Dendritic cell treated with granulocyte-macrophage colony-stimulating factor and Interleukin-4, amounts not matched to agents 40 ng/mL and 50 ng/mL, for 4 days (primary cell): ENCODE measurements at regions of chr15 and their contacts with region 1.

Region 1: DNA sequence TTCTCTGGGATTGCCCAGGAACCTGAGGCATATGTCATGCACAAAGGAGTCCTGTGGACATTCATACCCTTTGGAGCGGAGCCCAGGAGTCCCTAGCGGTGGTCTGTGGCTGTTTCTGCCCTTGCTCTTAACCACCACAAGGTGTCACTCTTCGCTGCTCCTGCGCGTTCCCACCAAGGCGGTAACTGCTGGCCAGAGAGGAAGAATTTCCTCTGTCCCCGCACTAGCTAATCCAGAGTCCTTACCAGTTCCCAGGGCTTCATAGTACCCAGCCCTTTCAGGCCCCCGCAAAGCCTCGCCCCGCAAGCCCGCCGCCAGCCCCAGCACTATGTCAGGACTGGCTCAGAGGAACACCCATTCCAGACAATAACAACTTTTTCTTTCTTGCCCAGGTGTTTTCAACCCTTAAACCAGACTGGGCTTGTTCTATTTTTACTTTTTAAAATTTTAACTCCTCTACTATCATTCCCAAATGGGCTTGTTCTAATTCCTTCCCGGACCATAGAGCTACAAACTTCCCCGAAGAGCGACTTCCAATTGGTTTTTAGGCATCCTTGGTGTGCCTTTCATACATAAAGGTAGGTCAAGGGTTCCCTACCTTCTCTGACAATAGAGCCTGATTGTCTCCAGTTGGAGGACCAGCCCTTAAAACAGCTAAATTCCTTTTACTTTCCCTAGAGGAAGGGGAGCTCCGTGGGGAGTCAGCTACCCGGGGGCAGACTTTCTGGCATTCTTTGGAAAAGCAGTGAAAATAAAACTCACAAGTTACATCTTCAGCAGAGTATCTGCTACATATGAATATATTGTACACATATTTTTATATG is 31.8 kb upstream of the ZNF774 start:
- H3K4me3 Mint-ChIP-seq: peak overlapping the region; percentile 17
- H3K27ac Mint-ChIP-seq: peak overlapping the region; percentile 61
- H3K4me1 Mint-ChIP-seq: peaks cover 22% of the 10 kb centered on the region
- H3K27me3 Mint-ChIP-seq: no peaks in the 10 kb centered on the region

Region 2: GRCh38 chr15:90233376-90234095 is 86.7 kb before region 1 on chr15 and contains the start of gene CIB1:
- intact Hi-C with region 1: no loop called
- H3K4me3 Mint-ChIP-seq: peak within 1 kb of the TSS; percentile 79
- H3K27ac Mint-ChIP-seq: peak within 1 kb of the TSS; percentile 83
- H3K4me1 Mint-ChIP-seq: peaks cover 53% of the 10 kb centered on the region
- H3K27me3 Mint-ChIP-seq: no peaks in the 10 kb centered on the region

Region 3: DNA sequence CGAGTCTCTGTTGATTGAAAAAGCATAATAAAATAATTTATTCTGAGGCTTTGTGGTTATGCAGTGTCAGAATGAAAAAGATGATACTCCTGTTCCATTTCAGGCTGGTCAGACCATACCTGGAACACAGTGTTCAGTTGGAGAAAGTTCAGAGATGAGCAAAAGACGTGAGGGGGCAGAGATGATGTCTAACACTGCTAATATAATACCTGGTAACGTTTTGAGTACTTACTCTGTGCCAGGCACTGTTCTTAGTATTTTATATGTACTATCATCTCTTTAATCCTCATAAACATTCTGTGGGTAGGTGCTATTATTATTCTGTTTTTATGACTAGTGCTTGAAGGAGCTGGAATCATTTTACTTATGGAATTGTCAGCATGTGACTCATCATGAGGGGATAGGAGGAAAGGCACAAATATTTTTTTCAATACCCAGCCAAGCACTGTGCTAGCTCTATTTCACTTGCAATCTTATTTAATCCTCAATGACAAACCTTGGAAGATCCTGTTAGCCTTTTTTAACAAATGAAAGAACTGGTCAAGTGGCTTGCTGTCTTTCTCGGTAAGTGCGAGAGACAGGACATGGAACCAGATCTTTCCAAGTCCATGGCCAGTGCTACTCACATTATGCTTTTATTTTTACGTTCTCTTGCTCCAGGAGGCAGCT is 99.6 kb after region 1 on chr15:
- intact Hi-C with region 1: loop called (anchors 5 kb)
- H3K4me3 Mint-ChIP-seq: no peak overlapping the region
- H3K27ac Mint-ChIP-seq: peak overlapping the region; percentile 23
- H3K4me1 Mint-ChIP-seq: peaks cover 62% of the 10 kb centered on the region
- H3K27me3 Mint-ChIP-seq: no peaks in the 10 kb centered on the region

Region 4: GRCh38 chr15:90482124-90483011 is 162.1 kb after region 1 on chr15:
- intact Hi-C with region 1: loop called (anchors 2 kb)
- H3K4me3 Mint-ChIP-seq: no peak overlapping the region
- H3K27ac Mint-ChIP-seq: no peak overlapping the region
- H3K4me1 Mint-ChIP-seq: no peaks in the 10 kb centered on the region
- H3K27me3 Mint-ChIP-seq: no peaks in the 10 kb centered on the region

Region 5: GRCh38 chr15:90603893-90604292 is 283.6 kb after region 1 on chr15:
- intact Hi-C with region 1: loop called (anchors 10 kb)
- H3K4me3 Mint-ChIP-seq: no peak overlapping the region
- H3K27ac Mint-ChIP-seq: no peak overlapping the region
- H3K4me1 Mint-ChIP-seq: peaks cover 13% of the 10 kb centered on the region
- H3K27me3 Mint-ChIP-seq: no peaks in the 10 kb centered on the region